ENCODE measurements at regions of chr1 and their contacts with region 1.

Region 1: GRCh38 chr1:1406817-1407635 is at the start of gene MRPL20:
- DNase-seq: peak; percentile 76 to 97
- H3K4me3 ChIP-seq: peak within 1 kb of the TSS; percentile 68 to 93
- H3K27ac ChIP-seq: peak within 1 kb of the TSS; percentile 72 to 77
- H3K4me1 ChIP-seq: peaks cover 7 to 25% of the 10 kb centered on the region in 2 donors
- H3K27me3 ChIP-seq: no peaks in the 10 kb centered on the region
- CTCF ChIP-seq: no peak
- total RNA-seq, gene MRPL20: 63.4 TPM

Region 2: DNA sequence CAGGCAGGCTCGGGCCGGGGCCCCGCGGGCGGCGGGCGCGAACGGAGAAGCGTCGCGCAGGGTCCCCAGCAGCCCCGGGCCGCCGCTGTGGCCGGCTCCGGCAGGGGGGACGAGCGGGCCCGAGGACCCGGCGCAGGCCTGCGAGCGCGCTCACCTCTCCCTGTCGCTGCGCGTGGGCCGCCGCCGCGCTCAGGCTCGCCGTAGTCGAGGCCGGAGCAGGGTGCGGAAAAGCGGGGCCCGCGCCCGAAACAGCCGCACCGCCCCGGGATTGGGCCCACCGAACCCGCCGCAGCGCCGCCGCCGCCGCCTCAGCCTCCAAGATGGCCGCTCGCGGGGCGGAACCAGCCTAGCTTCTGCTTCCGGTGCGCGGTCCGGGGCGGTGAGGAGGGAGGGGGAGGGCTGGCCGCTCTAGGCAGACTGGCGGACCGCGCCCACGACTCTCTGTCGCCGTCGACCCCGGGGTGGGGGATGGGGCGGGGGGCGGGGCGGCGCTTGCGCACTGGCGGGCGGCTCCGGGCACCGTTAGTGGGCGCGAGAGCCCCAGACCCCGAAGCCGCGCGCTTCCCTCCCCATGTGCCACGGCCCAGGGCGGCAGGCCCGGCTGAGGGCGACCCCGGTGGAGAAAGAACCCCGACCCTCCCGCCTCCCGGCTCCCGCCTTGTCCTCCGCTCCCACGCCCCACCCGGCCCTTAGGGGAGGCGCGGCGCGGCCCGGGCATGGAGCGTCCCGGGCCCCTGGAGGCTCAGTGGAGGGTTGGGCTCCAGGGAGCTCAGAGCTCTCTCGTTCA is 133.3 kb before region 1 on chr1 and contains the start of gene UBE2J2:
- intact Hi-C with region 1: loop called (anchors 2 kb)
- DNase-seq: peak; percentile 79 to 97
- H3K4me3 ChIP-seq: peak within 1 kb of the TSS; percentile 97 to 98
- H3K27ac ChIP-seq: peak within 1 kb of the TSS; percentile 67 to 76
- H3K4me1 ChIP-seq: peaks cover 29 to 39% of the 10 kb centered on the region in 2 donors
- H3K27me3 ChIP-seq: no peaks in the 10 kb centered on the region
- CTCF ChIP-seq: peak in 1 of 3 experiments; percentile 12
- total RNA-seq, gene UBE2J2: 25.2 TPM

Region 3: DNA sequence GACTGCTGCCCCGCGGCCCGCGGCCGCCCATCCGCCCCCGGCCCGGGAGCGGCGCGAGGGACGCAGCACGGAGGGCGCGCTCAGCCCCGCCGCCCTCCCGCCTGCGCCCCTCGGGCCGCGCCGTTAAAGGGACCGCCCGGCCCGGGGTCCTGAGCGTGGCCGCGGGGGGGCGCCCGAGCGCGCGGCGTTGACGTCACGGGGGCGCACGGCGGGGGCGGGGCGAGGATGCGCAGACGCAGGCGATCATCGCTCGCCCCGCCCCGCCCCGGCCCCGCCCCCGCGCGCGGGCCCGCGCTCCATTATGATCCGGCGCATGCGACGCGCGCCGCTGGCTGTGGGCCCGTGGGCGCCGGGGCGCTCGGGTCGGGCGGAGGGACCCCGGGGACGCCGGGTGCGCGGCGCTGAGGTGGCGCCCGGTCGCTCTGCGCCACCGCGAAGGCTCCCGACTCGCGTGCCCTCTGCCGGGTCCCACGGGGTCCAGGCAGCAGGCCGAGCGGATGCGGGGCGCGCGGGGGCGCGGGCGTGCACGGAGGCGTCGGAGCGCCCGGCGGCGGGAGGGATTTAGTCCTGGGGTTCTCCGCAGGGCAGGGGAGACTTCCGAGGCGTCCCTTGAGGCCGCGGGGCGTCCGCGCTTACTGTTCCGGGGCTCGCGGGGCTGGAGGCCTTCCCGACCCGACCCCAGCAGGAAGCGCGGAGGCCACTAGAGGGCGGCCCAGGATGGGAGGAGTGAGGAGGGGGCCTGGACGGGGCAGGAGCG is 57.6 kb before region 1 on chr1 and contains the start of gene DVL1:
- intact Hi-C with region 1: loop called (anchors 2 kb)
- DNase-seq: peak in 1 of 2 donors; percentile 83
- H3K4me3 ChIP-seq: peak within 1 kb of the TSS; percentile 91 to 93
- H3K27ac ChIP-seq: peak within 1 kb of the TSS; percentile 69 to 79
- H3K4me1 ChIP-seq: peaks cover 7 to 54% of the 10 kb centered on the region in 2 donors
- H3K27me3 ChIP-seq: no peaks in the 10 kb centered on the region
- CTCF ChIP-seq: peak; percentile 52 to 75 (median 68)
- total RNA-seq, gene DVL1: 66.7 TPM

Region 4: GRCh38 chr1:1471389-1472052 is 64.5 kb after region 1 on chr1 and contains the start of gene ATAD3B:
- intact Hi-C with region 1: loop called (anchors 1 kb)
- DNase-seq: peak; percentile 67 to 96
- H3K4me3 ChIP-seq: peak within 1 kb of the TSS; percentile 73 to 81
- H3K27ac ChIP-seq: peak within 1 kb of the TSS; percentile 72 to 77
- H3K4me1 ChIP-seq: peaks cover 0 to 22% of the 10 kb centered on the region in 2 donors
- H3K27me3 ChIP-seq: no peaks in the 10 kb centered on the region
- CTCF ChIP-seq: no peak
- total RNA-seq, gene ATAD3B: 14.2 TPM

Region 5: GRCh38 chr1:1511533-1512285 is 104.7 kb after region 1 on chr1 and contains the start of gene ATAD3A:
- intact Hi-C with region 1: loop called (anchors 10 kb)
- DNase-seq: peak; percentile 89 to 99
- H3K4me3 ChIP-seq: peak within 1 kb of the TSS; percentile 81
- H3K27ac ChIP-seq: peak within 1 kb of the TSS; percentile 85 to 93
- H3K4me1 ChIP-seq: peaks cover 0 to 7% of the 10 kb centered on the region in 2 donors
- H3K27me3 ChIP-seq: no peaks in the 10 kb centered on the region
- CTCF ChIP-seq: no peak
- total RNA-seq, gene ATAD3A: 46.3 TPM

Region 6: GRCh38 chr1:1615256-1616044 is 208.4 kb after region 1 on chr1 and contains the start of gene MIB2:
- intact Hi-C with region 1: loop called (anchors 10 kb)
- DNase-seq: peak; percentile 74 to 97
- H3K4me3 ChIP-seq: peak within 1 kb of the TSS; percentile 97 to 100
- H3K27ac ChIP-seq: peak within 1 kb of the TSS; percentile 100
- H3K4me1 ChIP-seq: peaks cover 15 to 25% of the 10 kb centered on the region in 2 donors
- H3K27me3 ChIP-seq: no peaks in the 10 kb centered on the region
- CTCF ChIP-seq: peak in 1 of 3 experiments; percentile 18
- total RNA-seq, gene MIB2: 96.9 TPM

Region 7: DNA sequence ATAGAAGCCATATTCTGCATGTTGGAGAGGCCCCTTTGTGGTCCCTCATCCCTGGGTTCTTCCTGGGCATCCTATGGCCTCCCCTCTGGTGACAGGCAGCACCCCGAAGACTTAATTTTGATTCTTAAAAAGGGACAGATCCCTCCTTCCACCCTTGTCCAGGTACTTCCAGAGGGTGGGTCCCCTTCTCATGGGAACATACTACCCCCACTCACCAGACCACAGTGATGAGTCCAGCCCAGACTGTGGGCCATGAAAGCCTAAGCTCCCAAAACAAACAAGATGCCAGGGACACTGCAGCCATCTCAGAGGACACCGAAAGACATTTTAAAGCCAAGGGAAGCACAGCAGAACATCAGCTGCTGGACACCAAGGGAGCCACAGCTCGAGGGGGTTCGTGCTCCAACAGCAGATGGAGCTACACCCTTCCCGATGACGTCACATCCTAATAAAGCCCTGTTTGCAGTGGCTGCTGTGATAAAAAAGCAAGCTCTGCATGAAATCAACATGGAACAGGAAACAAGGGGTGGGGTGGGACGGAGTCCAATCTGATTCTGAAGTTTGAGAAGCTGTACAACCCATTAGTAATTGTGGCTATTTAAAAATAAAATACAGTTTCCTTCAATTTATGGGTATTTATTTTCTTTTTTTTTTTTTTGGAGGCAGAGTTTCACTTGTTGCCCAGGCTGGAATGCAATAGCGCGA is 451.5 kb after region 1 on chr1:
- intact Hi-C with region 1: no loop called
- DNase-seq: peak; percentile 33 to 91
- H3K4me3 ChIP-seq: peak overlapping the region in 1 of 2 donors; percentile 19
- H3K27ac ChIP-seq: peak overlapping the region; percentile 76 to 86
- H3K4me1 ChIP-seq: peaks cover 3 to 53% of the 10 kb centered on the region in 2 donors
- H3K27me3 ChIP-seq: no peaks in the 10 kb centered on the region
- CTCF ChIP-seq: peak in 2 of 3 experiments; percentile 25 to 44